A673 (cell line): ENCODE measurements at regions of chr15 and their contacts with region 1.

Region 1: DNA sequence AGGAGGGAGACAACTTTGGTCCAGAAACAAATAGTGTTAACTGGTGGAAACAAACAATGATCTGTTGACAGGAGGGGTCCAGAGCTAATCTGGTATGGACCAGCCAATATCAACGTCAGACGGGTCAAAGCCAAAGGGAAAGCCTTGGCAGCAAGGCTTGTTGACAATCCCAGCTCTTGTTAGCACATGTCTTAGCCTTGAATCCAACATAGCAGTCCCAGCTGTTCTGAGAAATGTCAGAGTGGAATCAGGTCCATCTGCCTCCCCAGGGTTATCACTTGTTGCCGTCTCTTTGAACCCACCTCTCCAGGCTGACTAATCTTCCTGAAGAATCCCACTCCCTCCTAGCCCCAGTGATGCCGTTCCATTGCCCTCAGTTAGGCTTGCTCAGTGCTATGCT is 404.6 kb upstream of the MCTP2 start:
- DNase-seq: no peak
- H3K4me3 ChIP-seq: no peak overlapping the region
- H3K27ac ChIP-seq: no peak overlapping the region
- H3K4me1 ChIP-seq: peaks cover 7% of the 10 kb centered on the region
- H3K27me3 ChIP-seq: no peaks in the 10 kb centered on the region
- CTCF ChIP-seq: no peak

Region 2: DNA sequence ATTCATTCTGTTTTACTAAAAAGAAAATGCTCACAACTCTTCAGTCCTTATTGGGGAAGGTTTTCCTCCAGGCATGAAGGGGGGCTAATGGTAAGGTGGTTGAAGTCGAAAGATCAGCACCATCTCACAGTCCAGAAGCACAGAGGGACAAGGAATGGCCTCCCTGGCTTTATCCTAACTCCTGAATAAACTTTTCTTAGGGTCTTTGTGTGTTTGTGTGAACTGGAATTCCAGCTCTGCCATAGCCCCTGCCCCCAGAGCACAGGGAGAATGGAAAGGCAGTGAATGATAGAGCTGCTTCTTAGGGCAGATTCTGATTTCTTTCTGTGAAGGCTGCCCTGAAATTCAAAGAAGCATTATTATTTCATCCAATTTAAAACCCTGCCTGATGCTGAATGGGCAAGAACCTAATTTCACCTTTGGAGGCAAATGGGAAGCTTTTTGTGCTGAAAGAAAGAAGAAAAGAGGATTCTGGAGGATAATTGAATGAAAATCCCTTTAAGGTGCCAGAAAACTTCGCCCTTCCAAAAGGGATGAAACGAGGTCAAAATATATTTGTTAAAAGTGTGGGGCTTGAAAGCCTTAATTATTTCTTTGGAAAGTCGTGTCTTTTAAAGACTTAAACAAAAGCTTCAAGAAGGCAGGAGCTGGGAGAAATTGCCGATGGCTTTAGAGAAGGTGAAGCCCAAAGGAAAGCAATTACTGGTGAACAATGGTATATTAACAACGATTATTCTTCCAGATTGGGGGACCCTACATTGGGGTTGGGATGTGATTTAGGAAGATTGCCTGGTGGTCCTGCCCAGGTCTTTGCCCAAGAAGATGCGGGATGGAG is 477.9 kb before region 1 on chr15:
- CTCF ChIA-PET with region 1: interaction called, 10 read pairs
- POLR2A ChIA-PET with region 1: no interaction called
- intact Hi-C with region 1: no loop called
- DNase-seq: no peak
- H3K4me3 ChIP-seq: no peak overlapping the region
- H3K27ac ChIP-seq: no peak overlapping the region
- H3K4me1 ChIP-seq: no peaks in the 10 kb centered on the region
- H3K27me3 ChIP-seq: no peaks in the 10 kb centered on the region
- CTCF ChIP-seq: no peak

Region 3: GRCh38 chr15:93451265-93451664 is 375.5 kb before region 1 on chr15:
- CTCF ChIA-PET with region 1: no interaction called
- POLR2A ChIA-PET with region 1: no interaction called
- intact Hi-C with region 1: no loop called
- DNase-seq: no peak
- H3K4me3 ChIP-seq: no peak overlapping the region
- H3K27ac ChIP-seq: no peak overlapping the region
- H3K4me1 ChIP-seq: no peaks in the 10 kb centered on the region
- H3K27me3 ChIP-seq: no peaks in the 10 kb centered on the region
- CTCF ChIP-seq: no peak

Region 4: GRCh38 chr15:93813011-93813410 is 13.8 kb before region 1 on chr15:
- CTCF ChIA-PET with region 1: no interaction called
- POLR2A ChIA-PET with region 1: no interaction called
- intact Hi-C with region 1: no loop called
- DNase-seq: no peak
- H3K4me3 ChIP-seq: no peak overlapping the region
- H3K27ac ChIP-seq: no peak overlapping the region
- H3K4me1 ChIP-seq: no peaks in the 10 kb centered on the region
- H3K27me3 ChIP-seq: no peaks in the 10 kb centered on the region
- CTCF ChIP-seq: no peak